Activated CD8-positive, alpha-beta T cell treated with anti-CD3 and anti-CD28 coated beads for 36 hours (primary cell): ENCODE measurements at regions of chr14 and their contacts with region 1.

Region 1: GRCh38 chr14:81269100-81269978 is 48.6 kb upstream of the GTF2A1 start:
- DNase-seq: peak; percentile 28
- ATAC-seq: peak; percentile 68
- H3K4me3 Mint-ChIP-seq: no peak overlapping the region
- H3K27ac Mint-ChIP-seq: no peak overlapping the region
- H3K4me1 Mint-ChIP-seq: no peaks in the 10 kb centered on the region
- H3K27me3 Mint-ChIP-seq: peaks cover 20% of the 10 kb centered on the region
- CTCF ChIP-seq: peak; percentile 85

Region 2: DNA sequence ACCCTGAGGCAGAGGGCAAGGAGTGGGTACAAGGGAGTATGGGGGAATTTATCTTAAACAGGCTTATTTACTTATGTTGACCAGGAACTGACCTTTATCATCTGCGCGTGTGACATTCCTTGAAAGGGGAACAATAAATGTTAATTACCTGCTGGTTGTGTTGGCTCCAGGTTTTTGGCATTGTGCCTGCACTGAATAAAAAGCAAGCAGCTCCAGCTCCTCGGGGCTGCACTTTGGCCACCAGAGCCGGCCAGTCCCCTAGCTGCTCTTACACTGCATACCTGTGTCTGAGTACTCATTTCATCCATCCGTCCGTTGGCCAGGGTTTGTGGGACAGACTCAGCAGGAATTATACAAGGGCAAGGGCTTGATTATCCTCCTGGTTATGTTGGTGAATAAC is 20.2 kb after region 1 on chr14:
- CTCF ChIA-PET with region 1: no interaction called
- POLR2A ChIA-PET with region 1: no interaction called
- intact Hi-C with region 1: no loop called
- DNase-seq: no peak
- ATAC-seq: no peak
- H3K4me3 Mint-ChIP-seq: no peak overlapping the region
- H3K27ac Mint-ChIP-seq: no peak overlapping the region
- H3K4me1 Mint-ChIP-seq: no peaks in the 10 kb centered on the region
- H3K27me3 Mint-ChIP-seq: peaks cover 2% of the 10 kb centered on the region
- CTCF ChIP-seq: no peak

Region 3: DNA sequence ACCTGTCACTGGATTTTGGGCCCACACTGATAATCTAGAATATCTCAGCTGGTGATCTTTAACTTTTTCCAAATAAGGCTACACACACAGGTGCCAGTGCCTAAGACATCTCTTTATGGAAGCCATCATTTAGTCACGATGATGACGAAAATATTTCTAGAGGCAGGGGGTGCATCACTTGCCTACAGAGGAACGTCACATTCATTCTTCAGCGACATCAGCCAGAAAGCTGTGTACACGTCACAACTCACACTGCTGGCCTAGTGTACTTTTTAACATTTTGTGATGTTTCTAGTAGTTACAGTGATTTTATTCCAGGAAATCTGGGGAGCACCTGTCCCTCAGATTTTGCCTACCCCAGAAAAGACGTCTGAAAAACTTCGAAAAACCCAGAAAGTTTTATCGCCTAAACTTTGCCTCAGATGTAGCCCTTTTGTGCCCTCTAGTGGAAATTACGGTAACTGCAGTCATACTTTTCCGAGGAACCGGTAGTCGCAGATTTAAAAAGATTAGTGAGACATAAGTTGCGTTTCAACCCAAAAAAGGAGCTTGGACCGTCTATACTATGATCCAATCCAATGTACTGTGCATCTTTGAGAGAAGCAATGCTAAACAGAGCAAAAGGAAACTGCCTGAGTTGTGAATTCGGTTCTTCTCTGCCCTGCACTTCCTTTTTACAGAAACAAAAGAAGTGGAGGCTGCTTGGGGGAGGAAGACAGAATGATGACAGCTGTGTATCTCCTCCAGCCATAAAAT is 195.1 kb after region 1 on chr14:
- CTCF ChIA-PET with region 1: interaction called, 46 read pairs
- POLR2A ChIA-PET with region 1: interaction called, 4 read pairs
- intact Hi-C with region 1: no loop called
- DNase-seq: peak; percentile 70
- ATAC-seq: peak; percentile 78
- H3K4me3 Mint-ChIP-seq: peak overlapping the region; percentile 77
- H3K27ac Mint-ChIP-seq: peak overlapping the region; percentile 85
- H3K4me1 Mint-ChIP-seq: peaks cover 6% of the 10 kb centered on the region
- H3K27me3 Mint-ChIP-seq: no peaks in the 10 kb centered on the region
- CTCF ChIP-seq: peak; percentile 81

Region 4: DNA sequence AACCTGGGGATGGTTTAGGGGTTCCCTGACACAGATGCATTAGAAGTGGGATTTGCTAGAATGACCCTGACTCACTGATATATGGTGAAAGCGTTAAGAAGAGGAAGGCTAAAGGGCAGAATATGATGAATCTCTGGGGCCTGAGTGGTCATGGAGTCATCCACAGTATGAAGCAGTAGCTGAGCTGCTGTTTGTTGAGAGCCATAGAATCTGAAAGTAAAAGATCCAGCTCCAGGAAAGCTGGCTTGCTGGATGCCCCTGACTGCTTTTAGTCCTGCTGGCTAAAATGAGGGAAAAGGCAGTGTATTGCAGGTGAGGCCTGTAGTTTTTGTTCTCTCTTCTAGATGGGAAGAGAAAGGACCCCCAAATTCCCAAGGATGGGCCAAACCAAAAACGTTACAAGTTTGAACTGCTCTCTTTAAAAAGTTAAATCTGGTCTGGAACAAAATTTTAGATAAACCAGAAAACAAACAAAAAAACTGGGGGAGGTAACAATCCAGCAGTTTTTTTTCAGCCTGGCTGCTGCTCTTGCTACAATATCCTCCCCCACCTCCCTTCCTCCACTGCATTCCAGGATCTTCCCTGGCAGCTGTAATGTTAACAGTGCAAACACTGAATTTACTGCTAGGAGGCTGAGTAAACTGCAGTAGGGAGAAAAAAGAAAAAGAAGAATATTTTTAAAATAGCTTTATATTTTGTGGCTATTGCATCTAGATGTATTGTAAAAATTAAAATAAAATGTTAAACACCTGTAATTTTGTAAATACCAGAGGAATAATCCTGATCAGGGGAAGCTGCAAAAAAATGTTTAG is 247.9 kb after region 1 on chr14:
- CTCF ChIA-PET with region 1: no interaction called
- POLR2A ChIA-PET with region 1: no interaction called
- intact Hi-C with region 1: no loop called
- DNase-seq: no peak
- ATAC-seq: no peak
- H3K4me3 Mint-ChIP-seq: no peak overlapping the region
- H3K27ac Mint-ChIP-seq: no peak overlapping the region
- H3K4me1 Mint-ChIP-seq: peaks cover 31% of the 10 kb centered on the region
- H3K27me3 Mint-ChIP-seq: no peaks in the 10 kb centered on the region
- CTCF ChIP-seq: no peak